ENCODE measurements at regions of chr1 and their contacts with region 1.

Region 1: GRCh38 chr1:172357753-172358385 is 62.6 kb upstream of the C1orf105 start:
- DNase-seq: no peak
- ATAC-seq: no peak
- H3K4me3 Mint-ChIP-seq: no peak overlapping the region
- H3K27ac Mint-ChIP-seq: peak overlapping the region; percentile 12
- H3K4me1 Mint-ChIP-seq: peaks cover 44% of the 10 kb centered on the region
- H3K27me3 Mint-ChIP-seq: no peaks in the 10 kb centered on the region

Region 2: GRCh38 chr1:172002725-172003345 is 355.0 kb before region 1 on chr1:
- CTCF ChIA-PET with region 1: interaction called, 11 read pairs
- POLR2A ChIA-PET with region 1: no interaction called
- DNase-seq: peak; percentile 49
- ATAC-seq: no peak
- H3K4me3 Mint-ChIP-seq: no peak overlapping the region
- H3K27ac Mint-ChIP-seq: no peak overlapping the region
- H3K4me1 Mint-ChIP-seq: peaks cover 1% of the 10 kb centered on the region
- H3K27me3 Mint-ChIP-seq: no peaks in the 10 kb centered on the region

Region 3: GRCh38 chr1:172343240-172344160 is 14.4 kb before region 1 on chr1:
- CTCF ChIA-PET with region 1: interaction called, 22 read pairs
- POLR2A ChIA-PET with region 1: interaction called, 8 read pairs
- DNase-seq: no peak
- ATAC-seq: no peak
- H3K4me3 Mint-ChIP-seq: no peak overlapping the region
- H3K27ac Mint-ChIP-seq: no peak overlapping the region
- H3K4me1 Mint-ChIP-seq: peaks cover 22% of the 10 kb centered on the region
- H3K27me3 Mint-ChIP-seq: no peaks in the 10 kb centered on the region

Region 4: GRCh38 chr1:172380441-172381244 is 22.8 kb after region 1 on chr1:
- CTCF ChIA-PET with region 1: interaction called, 23 read pairs
- POLR2A ChIA-PET with region 1: interaction called, 9 read pairs
- DNase-seq: peak; percentile 44
- ATAC-seq: peak; percentile 98
- H3K4me3 Mint-ChIP-seq: peak overlapping the region; percentile 65
- H3K27ac Mint-ChIP-seq: peak overlapping the region; percentile 94
- H3K4me1 Mint-ChIP-seq: peaks cover 35% of the 10 kb centered on the region
- H3K27me3 Mint-ChIP-seq: no peaks in the 10 kb centered on the region

Region 5: DNA sequence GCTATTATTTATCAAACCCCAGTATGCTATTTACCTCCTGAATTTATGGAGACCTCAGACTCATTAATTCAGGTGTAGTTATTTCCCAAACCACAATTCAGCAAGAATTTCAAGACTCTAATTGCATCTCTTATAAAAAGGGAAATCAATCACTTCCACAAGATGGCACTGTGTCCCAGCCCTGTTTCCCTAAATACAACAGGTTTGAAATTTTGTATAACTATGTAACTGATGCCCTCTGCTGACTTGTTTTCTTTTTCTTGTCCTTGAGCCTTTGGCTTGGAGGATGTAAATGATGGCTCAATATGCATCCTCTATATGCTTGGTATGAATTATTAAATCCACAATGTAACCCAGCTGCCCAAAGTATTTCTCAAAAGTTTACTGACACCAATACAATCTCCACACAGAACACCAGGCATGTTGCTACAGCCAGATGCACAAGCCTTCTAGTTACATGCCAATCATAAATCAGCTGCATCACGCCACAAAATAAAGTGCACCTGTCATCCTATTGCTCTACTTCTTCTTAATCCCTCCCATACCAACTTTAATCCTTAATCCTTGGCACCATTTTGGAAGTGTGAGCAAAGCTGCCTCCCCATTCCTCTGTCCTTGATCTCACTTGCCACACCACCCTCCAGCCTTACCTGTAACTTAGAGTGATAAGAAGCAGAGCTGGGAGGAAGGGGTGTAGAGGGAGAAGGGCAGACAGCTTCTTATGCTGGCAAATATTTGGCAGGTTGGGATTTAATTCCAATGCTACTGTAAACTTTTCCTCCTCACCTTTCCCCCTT is 71.7 kb after region 1 on chr1:
- CTCF ChIA-PET with region 1: interaction called, 13 read pairs
- POLR2A ChIA-PET with region 1: no interaction called
- DNase-seq: peak; percentile 71
- ATAC-seq: peak; percentile 70
- H3K4me3 Mint-ChIP-seq: no peak overlapping the region
- H3K27ac Mint-ChIP-seq: no peak overlapping the region
- H3K4me1 Mint-ChIP-seq: peaks cover 35% of the 10 kb centered on the region
- H3K27me3 Mint-ChIP-seq: no peaks in the 10 kb centered on the region

Measured in activated CD8-positive, alpha-beta T cell treated with anti-CD3 and anti-CD28 coated beads, Interleukin-2, amount 10 ng/mL, durations not matched to agents 7 days and 5 days (primary cell).